PC-3 (cell line): ENCODE measurements at regions of chr11 and their contacts with region 1.

Region 1: GRCh38 chr11:103202048-103202651 is 92.9 kb downstream of the DYNC2H1 start:
- DNase-seq: peak; percentile 74
- ATAC-seq: peak; percentile 67
- H3K4me3 ChIP-seq: no peak overlapping the region
- H3K27ac ChIP-seq: no peak overlapping the region
- H3K4me1 ChIP-seq: no peaks in the 10 kb centered on the region
- H3K27me3 ChIP-seq: no peaks in the 10 kb centered on the region
- CTCF ChIP-seq: peak; percentile 90

Region 2: DNA sequence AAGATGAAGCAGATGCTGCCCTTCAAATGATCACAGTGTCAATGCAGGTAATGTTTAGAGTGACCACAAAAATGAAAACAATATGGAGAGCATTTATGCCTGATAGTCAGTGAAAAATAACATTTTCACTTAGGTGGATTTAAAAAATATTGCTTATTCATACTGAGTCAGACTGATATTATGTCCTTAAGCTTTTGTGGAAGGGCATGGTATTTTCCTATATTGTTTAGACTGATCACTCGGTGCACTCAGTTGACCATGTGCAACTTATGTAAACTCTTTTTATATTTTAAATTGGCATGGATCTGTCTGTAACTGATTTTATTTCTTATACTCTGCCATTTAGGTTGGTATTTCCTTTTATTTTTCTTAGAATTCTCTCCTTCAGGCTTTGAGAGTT is 13.7 kb after region 1 on chr11:
- CTCF ChIA-PET with region 1: no interaction called
- POLR2A ChIA-PET with region 1: no interaction called
- intact Hi-C with region 1: no loop called
- DNase-seq: peak; percentile 9
- ATAC-seq: peak; percentile 31; the same call in 1 of the 2 replicates
- H3K4me3 ChIP-seq: no peak overlapping the region
- H3K27ac ChIP-seq: no peak overlapping the region
- H3K4me1 ChIP-seq: peaks cover 5% of the 10 kb centered on the region
- H3K27me3 ChIP-seq: no peaks in the 10 kb centered on the region
- CTCF ChIP-seq: no peak

Region 3: GRCh38 chr11:103317118-103317517 is 115.0 kb after region 1 on chr11:
- CTCF ChIA-PET with region 1: no interaction called
- POLR2A ChIA-PET with region 1: no interaction called
- intact Hi-C with region 1: loop called (anchors 5 kb)
- DNase-seq: no peak
- ATAC-seq: no peak
- H3K4me3 ChIP-seq: no peak overlapping the region
- H3K27ac ChIP-seq: no peak overlapping the region
- H3K4me1 ChIP-seq: no peaks in the 10 kb centered on the region
- H3K27me3 ChIP-seq: no peaks in the 10 kb centered on the region
- CTCF ChIP-seq: no peak